B cell (primary cell): ENCODE measurements at regions of chr5 and their contacts with region 1.

Region 1: DNA sequence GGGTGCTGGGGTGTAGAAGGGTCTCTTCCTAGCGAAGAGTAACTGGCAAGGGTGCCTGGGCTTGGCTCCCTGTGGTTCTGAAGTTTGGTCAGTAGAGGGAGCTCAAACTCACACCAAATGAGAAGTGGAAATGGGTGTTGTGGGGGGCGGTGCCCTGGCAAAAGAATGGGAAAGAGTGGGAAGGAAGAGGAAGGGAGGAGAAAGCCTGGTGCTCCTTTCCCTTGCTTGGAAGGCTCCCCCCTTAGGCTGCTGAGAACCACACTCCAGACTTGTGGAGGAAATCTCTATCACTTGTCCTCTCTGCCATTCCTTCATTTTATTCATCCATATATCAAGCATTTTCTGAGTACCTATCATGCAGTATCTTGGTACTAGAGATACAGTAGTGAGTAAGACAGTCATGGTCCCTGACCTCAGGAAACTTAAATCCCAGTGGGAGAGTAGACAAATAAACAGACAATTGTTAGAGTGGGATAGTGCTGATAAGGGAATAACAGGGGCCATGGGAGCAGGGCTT is 13.0 kb downstream of the SLC4A9 start:
- DNase-seq: peak; percentile 63
- ATAC-seq: peak; percentile 71
- H3K4me3 ChIP-seq: no peak overlapping the region
- H3K4me3 Mint-ChIP-seq: no peak overlapping the region
- H3K27ac ChIP-seq: no peak overlapping the region
- H3K27ac Mint-ChIP-seq: no peak overlapping the region
- H3K4me1 ChIP-seq: no peaks in the 10 kb centered on the region
- H3K4me1 Mint-ChIP-seq: peaks cover 3% of the 10 kb centered on the region
- H3K27me3 ChIP-seq: no peaks in the 10 kb centered on the region
- H3K27me3 Mint-ChIP-seq: no peaks in the 10 kb centered on the region
- CTCF ChIP-seq: peak; percentile 85

Region 2: GRCh38 chr5:140351609-140352334 is 21.3 kb before region 1 on chr5:
- CTCF ChIA-PET with region 1: interaction called, 7 read pairs
- POLR2A ChIA-PET with region 1: interaction called, 14 read pairs
- intact Hi-C with region 1: no loop called
- DNase-seq: peak; percentile 82
- ATAC-seq: peak; percentile 76
- H3K4me3 ChIP-seq: no peak overlapping the region
- H3K4me3 Mint-ChIP-seq: no peak overlapping the region
- H3K27ac ChIP-seq: no peak overlapping the region
- H3K27ac Mint-ChIP-seq: no peak overlapping the region
- H3K4me1 ChIP-seq: peaks cover 26 to 30% of the 10 kb centered on the region in 2 donors
- H3K4me1 Mint-ChIP-seq: peaks cover 25% of the 10 kb centered on the region
- H3K27me3 ChIP-seq: peaks cover 0 to 12% (median 0%) of the 10 kb centered on the region in 4 experiments
- H3K27me3 Mint-ChIP-seq: peaks cover 9% of the 10 kb centered on the region
- CTCF ChIP-seq: peak; percentile 93

Region 3: GRCh38 chr5:140388052-140388451 is 15.0 kb after region 1 on chr5:
- CTCF ChIA-PET with region 1: interaction called, 25 read pairs
- POLR2A ChIA-PET with region 1: no interaction called
- intact Hi-C with region 1: no loop called
- DNase-seq: no peak
- ATAC-seq: no peak
- H3K4me3 ChIP-seq: no peak overlapping the region
- H3K4me3 Mint-ChIP-seq: no peak overlapping the region
- H3K27ac ChIP-seq: no peak overlapping the region
- H3K27ac Mint-ChIP-seq: no peak overlapping the region
- H3K4me1 ChIP-seq: no peaks in the 10 kb centered on the region
- H3K4me1 Mint-ChIP-seq: no peaks in the 10 kb centered on the region
- H3K27me3 ChIP-seq: no peaks in the 10 kb centered on the region
- H3K27me3 Mint-ChIP-seq: no peaks in the 10 kb centered on the region
- CTCF ChIP-seq: no peak

Region 4: DNA sequence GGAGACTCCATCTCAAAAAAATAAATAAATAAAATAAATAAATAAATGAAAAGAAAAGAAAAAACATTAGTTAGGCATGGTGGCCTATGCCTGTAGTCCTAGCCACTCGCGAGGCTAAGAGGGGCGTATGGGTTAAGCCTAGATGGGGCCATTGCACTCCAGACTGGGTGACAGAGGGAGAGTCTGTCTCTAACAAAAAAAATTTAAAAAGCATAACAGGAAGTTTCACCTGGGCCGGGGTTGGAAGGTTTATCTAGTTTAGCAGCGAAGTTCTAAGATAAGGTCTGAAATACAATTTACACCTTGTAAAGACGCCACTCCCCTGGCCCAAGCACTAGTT is 345.2 kb after region 1 on chr5:
- CTCF ChIA-PET with region 1: interaction called, 93 read pairs
- POLR2A ChIA-PET with region 1: no interaction called
- intact Hi-C with region 1: loop called (anchors 1 kb)
- DNase-seq: no peak
- ATAC-seq: no peak
- H3K4me3 ChIP-seq: no peak overlapping the region
- H3K4me3 Mint-ChIP-seq: no peak overlapping the region
- H3K27ac ChIP-seq: no peak overlapping the region
- H3K27ac Mint-ChIP-seq: no peak overlapping the region
- H3K4me1 ChIP-seq: no peaks in the 10 kb centered on the region
- H3K4me1 Mint-ChIP-seq: no peaks in the 10 kb centered on the region
- H3K27me3 ChIP-seq: peaks cover 0 to 4% (median 2%) of the 10 kb centered on the region in 4 experiments
- H3K27me3 Mint-ChIP-seq: peaks cover 6% of the 10 kb centered on the region
- CTCF ChIP-seq: no peak

Region 5: DNA sequence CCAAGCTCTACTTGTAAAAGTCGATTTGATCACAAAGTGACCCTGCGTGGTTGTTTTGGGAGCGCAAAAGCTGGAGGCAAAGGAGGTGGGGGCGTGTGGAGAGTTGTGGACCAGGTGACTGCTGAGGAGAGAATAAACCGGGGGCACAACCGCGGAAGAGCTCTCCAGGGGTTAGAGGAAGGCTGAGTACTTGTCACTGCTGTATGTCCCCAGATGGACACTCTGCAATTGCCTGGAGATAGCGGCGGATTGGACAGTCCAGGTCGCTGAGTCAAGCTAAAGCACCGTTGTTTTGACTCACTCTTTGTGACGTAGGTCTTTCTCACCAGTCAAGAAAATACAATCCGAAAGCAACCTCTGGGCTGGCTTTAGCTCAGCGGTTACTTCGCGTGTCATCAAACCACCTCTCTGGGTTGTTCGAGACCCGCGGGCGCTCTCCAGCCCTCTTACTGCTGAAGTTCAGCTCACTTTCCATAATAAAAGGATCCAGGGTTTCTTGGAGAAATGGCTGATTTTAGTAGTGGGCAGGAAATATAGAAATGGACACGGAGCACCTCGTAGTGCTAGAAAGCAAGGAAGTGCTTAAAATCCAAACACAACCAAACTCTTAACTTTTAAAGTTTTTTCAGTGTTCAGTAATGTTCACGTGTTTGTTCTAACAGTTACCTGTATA is 352.9 kb after region 1 on chr5:
- CTCF ChIA-PET with region 1: interaction called, 93 read pairs
- POLR2A ChIA-PET with region 1: no interaction called
- intact Hi-C with region 1: no loop called
- DNase-seq: peak; percentile 40
- ATAC-seq: peak; percentile 56
- H3K4me3 ChIP-seq: peak overlapping the region in 1 of 5 experiments; percentile 33
- H3K4me3 Mint-ChIP-seq: no peak overlapping the region
- H3K27ac ChIP-seq: no peak overlapping the region
- H3K27ac Mint-ChIP-seq: peak overlapping the region; percentile 37
- H3K4me1 ChIP-seq: peaks cover 0 to 6% of the 10 kb centered on the region in 2 donors
- H3K4me1 Mint-ChIP-seq: no peaks in the 10 kb centered on the region
- H3K27me3 ChIP-seq: peaks cover 0 to 17% (median 9%) of the 10 kb centered on the region in 4 experiments
- H3K27me3 Mint-ChIP-seq: peaks cover 33% of the 10 kb centered on the region
- CTCF ChIP-seq: no peak

Region 6: GRCh38 chr5:141040771-141041426 is 667.9 kb after region 1 on chr5:
- CTCF ChIA-PET with region 1: no interaction called
- POLR2A ChIA-PET with region 1: no interaction called
- intact Hi-C with region 1: loop called (anchors 10 kb)
- DNase-seq: peak; percentile 54
- ATAC-seq: peak; percentile 39
- H3K4me3 ChIP-seq: no peak overlapping the region
- H3K4me3 Mint-ChIP-seq: no peak overlapping the region
- H3K27ac ChIP-seq: no peak overlapping the region
- H3K27ac Mint-ChIP-seq: no peak overlapping the region
- H3K4me1 ChIP-seq: peaks cover 0 to 2% of the 10 kb centered on the region in 2 donors
- H3K4me1 Mint-ChIP-seq: no peaks in the 10 kb centered on the region
- H3K27me3 ChIP-seq: peaks cover 0 to 6% (median 0%) of the 10 kb centered on the region in 4 experiments
- H3K27me3 Mint-ChIP-seq: peaks cover 3% of the 10 kb centered on the region
- CTCF ChIP-seq: peak; percentile 44